Gastrocnemius medialis (tissue), 4 donors: ENCODE measurements at regions of chr1 and their contacts with region 1.

Region 1: DNA sequence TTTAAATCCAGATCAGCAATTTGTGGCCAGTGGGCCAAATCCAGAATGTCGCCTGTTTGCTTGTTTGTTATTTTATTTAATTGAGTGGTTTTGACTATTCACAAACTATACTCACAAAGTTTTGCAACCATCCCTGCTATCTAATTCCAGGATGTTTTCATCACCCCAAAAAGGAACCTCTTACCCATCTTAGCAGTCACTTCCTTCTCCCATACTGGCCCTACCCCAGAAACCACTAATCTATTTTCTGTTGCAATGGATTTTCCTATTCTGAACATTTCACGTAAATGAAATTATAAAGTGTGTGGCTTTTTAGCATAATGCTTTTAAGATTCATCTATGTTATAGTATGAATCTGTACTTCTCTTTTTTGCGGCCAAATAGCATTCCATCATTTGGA is 41.3 kb downstream of the WDTC1 start:
- DNase-seq: no peak
- ATAC-seq: no peak
- H3K4me3 ChIP-seq: no peak overlapping the region
- H3K27ac ChIP-seq: no peak overlapping the region
- H3K4me1 ChIP-seq: no peaks in the 10 kb centered on the region
- H3K27me3 ChIP-seq: no peaks in the 10 kb centered on the region
- CTCF ChIP-seq: no peak
- POLR2A ChIP-seq: no peak

Region 2: GRCh38 chr1:27102707-27103491 is 172.8 kb before region 1 on chr1:
- in situ Hi-C with region 1: loop called (anchors 5 to 10 kb)
- intact Hi-C with region 1: no loop called
- DNase-seq: peak in 1 of 2 donors; percentile 65
- ATAC-seq: peak; percentile 49 to 77
- H3K4me3 ChIP-seq: no peak overlapping the region
- H3K27ac ChIP-seq: no peak overlapping the region
- H3K4me1 ChIP-seq: peaks cover 0 to 6% of the 10 kb centered on the region in 2 donors
- H3K27me3 ChIP-seq: no peaks in the 10 kb centered on the region
- CTCF ChIP-seq: peak; percentile 93 to 99 (median 98)
- POLR2A ChIP-seq: no peak

Region 3: GRCh38 chr1:27203946-27204345 is 71.8 kb before region 1 on chr1:
- in situ Hi-C with region 1: loop called in 2 of 4 experiments (anchors 10 kb)
- intact Hi-C with region 1: loop called (anchors 5 kb)
- DNase-seq: no peak
- ATAC-seq: no peak
- H3K4me3 ChIP-seq: no peak overlapping the region
- H3K27ac ChIP-seq: no peak overlapping the region
- H3K4me1 ChIP-seq: no peaks in the 10 kb centered on the region
- H3K27me3 ChIP-seq: no peaks in the 10 kb centered on the region
- CTCF ChIP-seq: no peak
- POLR2A ChIP-seq: no peak